ENCODE measurements at regions of chr15 and their contacts with region 1.

Region 1: DNA sequence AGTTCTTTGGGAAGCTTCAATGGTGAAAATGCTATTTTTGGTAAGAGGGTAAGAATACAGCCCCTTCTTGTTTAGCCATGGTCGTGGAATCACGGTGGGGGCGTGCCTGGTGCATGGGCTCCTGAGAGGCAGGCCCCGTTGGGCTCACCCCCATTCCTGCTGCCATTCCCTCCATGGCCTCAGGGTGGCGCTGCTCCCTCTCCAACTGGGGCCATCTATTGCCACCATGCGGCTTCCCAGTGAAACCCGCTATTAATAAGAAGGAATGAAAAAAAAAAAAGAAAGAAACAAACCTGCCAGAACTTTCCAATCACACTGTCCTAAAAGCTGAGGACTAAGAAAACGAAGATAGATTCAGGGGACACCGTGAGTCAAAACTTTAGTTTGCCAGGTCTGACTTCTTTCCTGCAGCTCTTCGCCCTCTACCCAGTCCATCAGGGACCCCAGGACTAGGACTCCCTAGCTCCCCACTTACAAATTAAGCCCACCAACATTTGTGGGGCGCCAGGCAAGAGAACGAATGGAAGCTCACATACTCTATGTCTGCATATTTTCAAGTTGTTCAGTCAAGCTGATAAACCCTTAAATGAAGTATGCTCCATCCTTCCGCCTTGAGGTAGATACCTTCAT is 30.6 kb upstream of the ABHD2 start:
- DNase-seq: peak; percentile 62
- ATAC-seq: peak; percentile 91
- H3K4me3 ChIP-seq: no peak overlapping the region
- H3K27ac ChIP-seq: no peak overlapping the region
- H3K4me1 ChIP-seq: peaks cover 51% of the 10 kb centered on the region
- H3K27me3 ChIP-seq: no peaks in the 10 kb centered on the region
- CTCF ChIP-seq: peak; percentile 94
- EP300 ChIP-seq: no peak
- POLR2A ChIP-seq: no peak
- RAD21 ChIP-seq: peak; percentile 93

Region 2: GRCh38 chr15:89034288-89034687 is 23.3 kb before region 1 on chr15:
- CTCF ChIA-PET with region 1: no interaction called
- POLR2A ChIA-PET with region 1: no interaction called
- in situ Hi-C with region 1: no loop called
- intact Hi-C with region 1: loop called (anchors 1 kb)
- DNase-seq: peak; percentile 12
- ATAC-seq: no peak
- H3K4me3 ChIP-seq: no peak overlapping the region
- H3K27ac ChIP-seq: no peak overlapping the region
- H3K4me1 ChIP-seq: no peaks in the 10 kb centered on the region
- H3K27me3 ChIP-seq: peaks cover 0 to 8% of the 10 kb centered on the region in 2 experiments; a peak in 2 of 5 replicates
- CTCF ChIP-seq: peak; percentile 50
- EP300 ChIP-seq: no peak
- POLR2A ChIP-seq: no peak
- RAD21 ChIP-seq: no peak

Region 3: GRCh38 chr15:89129123-89129815 is 71.7 kb after region 1 on chr15:
- CTCF ChIA-PET with region 1: interaction called, 19 read pairs
- POLR2A ChIA-PET with region 1: interaction called, 4 read pairs
- in situ Hi-C with region 1: loop called (anchors 5 kb)
- intact Hi-C with region 1: loop called (anchors 1 kb)
- DNase-seq: no peak
- ATAC-seq: no peak
- H3K4me3 ChIP-seq: peak overlapping the region in 1 of 3 experiments; percentile 4; a peak in 1 of 6 replicates
- H3K27ac ChIP-seq: peak overlapping the region; percentile 76
- H3K4me1 ChIP-seq: peaks cover 100% of the 10 kb centered on the region
- H3K27me3 ChIP-seq: no peaks in the 10 kb centered on the region
- CTCF ChIP-seq: peak; percentile 75
- EP300 ChIP-seq: no peak
- POLR2A ChIP-seq: no peak
- RAD21 ChIP-seq: peak; percentile 77

Region 4: DNA sequence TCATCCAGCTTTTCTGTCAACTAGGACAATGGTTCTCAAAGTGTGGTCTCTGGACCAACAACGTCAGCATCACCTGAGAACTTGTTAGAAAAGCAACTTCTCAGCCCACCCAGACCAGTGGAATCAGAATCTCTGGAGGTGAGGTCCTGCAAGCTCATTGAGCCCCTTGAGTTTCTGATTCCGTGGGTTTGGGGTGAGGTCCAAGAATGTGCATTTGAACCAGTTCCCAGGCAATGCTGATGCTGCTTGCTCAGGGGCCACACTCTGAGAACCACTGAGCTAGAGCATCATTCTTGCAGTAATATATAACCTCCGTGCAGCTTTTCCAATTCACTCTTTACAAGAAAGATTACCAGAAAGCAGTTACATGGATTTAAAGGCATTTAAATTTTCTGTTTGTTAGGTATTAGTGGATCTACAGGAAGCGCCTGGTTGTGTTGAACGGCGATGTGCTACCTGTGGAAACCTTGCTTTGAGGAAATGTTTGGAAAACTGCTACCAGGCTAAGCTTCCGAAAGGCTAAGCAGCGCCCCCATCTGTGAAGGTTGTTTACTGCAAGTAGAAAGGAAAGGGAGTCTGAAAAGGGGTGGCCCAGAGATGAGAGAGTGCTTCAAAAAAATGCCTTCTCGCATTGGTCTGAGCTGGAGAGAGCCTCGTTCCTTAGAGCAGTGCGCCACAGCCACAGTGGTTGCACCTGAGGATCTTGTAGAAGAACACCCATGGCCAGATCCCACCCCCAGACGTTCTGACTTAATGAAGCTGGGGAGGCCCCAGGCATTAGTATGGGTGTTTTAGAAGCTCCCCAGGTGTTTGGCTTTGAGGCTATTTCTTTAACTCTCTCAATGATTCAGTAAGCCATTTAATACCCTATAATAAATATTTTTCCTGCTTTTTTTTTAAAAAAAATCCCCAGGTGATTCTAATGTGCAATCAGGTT is 113.8 kb after region 1 on chr15:
- CTCF ChIA-PET with region 1: interaction called, 75 read pairs
- POLR2A ChIA-PET with region 1: interaction called, 4 read pairs
- in situ Hi-C with region 1: loop called (anchors 5 kb)
- intact Hi-C with region 1: loop called (anchors 1 kb)
- DNase-seq: peak; percentile 62
- ATAC-seq: peak; percentile 83
- H3K4me3 ChIP-seq: no peak overlapping the region
- H3K27ac ChIP-seq: no peak overlapping the region
- H3K4me1 ChIP-seq: peaks cover 32% of the 10 kb centered on the region
- H3K27me3 ChIP-seq: no peaks in the 10 kb centered on the region
- CTCF ChIP-seq: peak; percentile 87
- EP300 ChIP-seq: no peak
- POLR2A ChIP-seq: no peak
- RAD21 ChIP-seq: peak; percentile 84

Region 5: DNA sequence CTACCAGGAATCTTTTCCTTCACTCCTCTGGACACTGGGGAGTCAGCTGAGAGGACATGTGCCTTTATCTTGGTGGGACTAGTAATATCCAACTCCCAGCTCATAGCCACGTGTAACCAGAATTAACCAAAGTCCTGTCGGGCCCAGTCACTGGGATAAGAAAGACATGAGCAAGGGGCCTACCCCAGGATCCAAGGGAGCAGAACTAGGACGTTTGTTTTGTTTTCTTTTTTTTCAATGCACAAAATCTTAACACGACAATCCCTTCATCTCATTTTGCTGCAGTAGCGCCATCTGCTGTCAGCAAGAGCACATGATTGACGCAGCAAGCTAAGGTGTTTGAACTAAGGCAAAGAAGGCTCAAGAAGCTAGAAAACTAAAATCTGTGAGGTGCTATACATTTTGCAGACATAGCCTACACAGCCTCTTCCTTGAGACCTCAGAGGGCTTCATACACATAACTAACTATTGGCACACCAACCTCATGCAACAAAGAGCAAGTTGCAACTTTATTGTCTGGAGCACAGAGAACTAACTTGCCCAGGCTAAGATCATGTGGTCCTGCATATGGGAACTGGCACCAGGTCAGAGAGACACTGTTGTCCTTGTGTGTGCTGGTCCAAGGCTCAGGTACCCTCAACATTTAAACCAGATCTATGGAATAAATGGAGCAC is 120.2 kb after region 1 on chr15:
- CTCF ChIA-PET with region 1: interaction called, 75 read pairs
- POLR2A ChIA-PET with region 1: no interaction called
- in situ Hi-C with region 1: loop called (anchors 5 kb)
- intact Hi-C with region 1: loop called (anchors 1 kb)
- DNase-seq: peak; percentile 57
- ATAC-seq: peak; percentile 64
- H3K4me3 ChIP-seq: no peak overlapping the region
- H3K27ac ChIP-seq: no peak overlapping the region
- H3K4me1 ChIP-seq: no peaks in the 10 kb centered on the region
- H3K27me3 ChIP-seq: no peaks in the 10 kb centered on the region
- CTCF ChIP-seq: peak; percentile 87
- EP300 ChIP-seq: no peak
- POLR2A ChIP-seq: no peak
- RAD21 ChIP-seq: peak; percentile 83

Region 6: DNA sequence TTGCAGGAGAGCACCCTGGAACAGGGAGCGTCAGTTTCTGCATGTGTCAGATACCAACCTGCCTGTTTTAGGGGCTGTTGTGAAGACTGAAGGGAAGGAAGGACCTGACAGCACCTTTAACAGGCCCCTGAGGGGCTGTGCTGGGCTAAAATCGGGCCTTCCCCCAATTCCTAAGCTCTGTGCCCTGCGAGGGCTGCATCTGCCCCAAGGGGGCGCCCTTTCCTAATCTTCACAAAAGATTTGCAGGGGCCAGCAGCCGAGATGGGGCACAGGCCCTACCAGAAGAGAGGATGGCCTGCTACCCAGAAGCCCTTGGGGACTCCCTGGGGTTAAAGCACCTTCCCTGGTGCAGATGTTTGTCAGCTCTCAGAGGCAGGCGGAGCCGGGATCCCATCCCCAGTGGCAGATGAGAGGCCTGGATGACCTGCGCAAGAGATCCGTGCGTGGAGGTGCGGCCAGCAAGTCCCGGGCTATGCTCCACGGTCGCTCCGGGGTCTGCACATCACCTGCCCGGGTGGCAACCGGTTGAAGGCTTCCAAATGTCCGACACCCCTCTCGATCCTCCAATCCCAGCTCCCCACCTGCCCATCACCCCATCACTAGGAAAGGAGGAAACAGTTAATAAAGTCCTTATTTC is 385.2 kb after region 1 on chr15:
- CTCF ChIA-PET with region 1: no interaction called
- POLR2A ChIA-PET with region 1: no interaction called
- in situ Hi-C with region 1: no loop called
- intact Hi-C with region 1: no loop called
- DNase-seq: peak; percentile 31
- ATAC-seq: peak; percentile 87
- H3K4me3 ChIP-seq: no peak overlapping the region
- H3K27ac ChIP-seq: no peak overlapping the region
- H3K4me1 ChIP-seq: no peaks in the 10 kb centered on the region
- H3K27me3 ChIP-seq: peaks cover 4 to 34% of the 10 kb centered on the region in 2 experiments; a peak in 3 of 5 replicates
- CTCF ChIP-seq: peak; percentile 87
- EP300 ChIP-seq: no peak
- POLR2A ChIP-seq: no peak
- RAD21 ChIP-seq: peak; percentile 76

Region 7: DNA sequence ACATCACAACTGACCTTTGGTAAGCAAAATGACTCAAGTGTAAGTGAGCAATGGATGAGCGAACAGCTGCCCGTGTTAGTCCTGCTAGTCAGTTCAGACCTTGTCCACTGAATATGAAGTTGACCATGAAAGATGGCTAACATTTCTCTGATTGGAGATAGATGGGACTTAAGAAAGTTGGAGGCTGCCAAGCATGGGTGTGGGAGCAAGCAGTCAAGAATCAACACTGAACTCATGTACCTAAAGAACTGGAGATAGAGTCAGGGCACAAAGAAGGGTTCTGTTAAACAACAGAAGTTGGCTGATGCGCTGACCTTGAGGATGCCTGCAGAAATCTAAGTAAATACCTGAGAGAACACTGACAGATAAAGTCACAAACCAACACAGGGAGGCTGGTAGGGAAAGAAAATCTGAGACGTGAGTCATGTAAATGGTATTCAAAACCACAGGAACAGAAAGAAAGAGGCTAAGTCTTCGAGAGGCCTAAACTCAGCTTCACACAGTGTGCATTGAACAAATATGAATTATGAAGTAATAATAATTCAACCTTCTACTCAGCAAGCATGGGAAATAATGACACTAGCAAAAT is 787.8 kb after region 1 on chr15:
- CTCF ChIA-PET with region 1: no interaction called
- POLR2A ChIA-PET with region 1: no interaction called
- in situ Hi-C with region 1: no loop called
- intact Hi-C with region 1: no loop called
- DNase-seq: peak; percentile 66
- ATAC-seq: no peak
- H3K4me3 ChIP-seq: no peak overlapping the region
- H3K27ac ChIP-seq: no peak overlapping the region
- H3K4me1 ChIP-seq: peaks cover 14% of the 10 kb centered on the region
- H3K27me3 ChIP-seq: no peaks in the 10 kb centered on the region
- CTCF ChIP-seq: no peak
- EP300 ChIP-seq: no peak; a peak in 1 of 4 replicates
- POLR2A ChIP-seq: no peak
- RAD21 ChIP-seq: no peak

Measured in HepG2 (cell line).